Sigmoid colon (tissue), 7 donors: ENCODE measurements at regions of chr2 and their contacts with region 1.

Region 1: DNA sequence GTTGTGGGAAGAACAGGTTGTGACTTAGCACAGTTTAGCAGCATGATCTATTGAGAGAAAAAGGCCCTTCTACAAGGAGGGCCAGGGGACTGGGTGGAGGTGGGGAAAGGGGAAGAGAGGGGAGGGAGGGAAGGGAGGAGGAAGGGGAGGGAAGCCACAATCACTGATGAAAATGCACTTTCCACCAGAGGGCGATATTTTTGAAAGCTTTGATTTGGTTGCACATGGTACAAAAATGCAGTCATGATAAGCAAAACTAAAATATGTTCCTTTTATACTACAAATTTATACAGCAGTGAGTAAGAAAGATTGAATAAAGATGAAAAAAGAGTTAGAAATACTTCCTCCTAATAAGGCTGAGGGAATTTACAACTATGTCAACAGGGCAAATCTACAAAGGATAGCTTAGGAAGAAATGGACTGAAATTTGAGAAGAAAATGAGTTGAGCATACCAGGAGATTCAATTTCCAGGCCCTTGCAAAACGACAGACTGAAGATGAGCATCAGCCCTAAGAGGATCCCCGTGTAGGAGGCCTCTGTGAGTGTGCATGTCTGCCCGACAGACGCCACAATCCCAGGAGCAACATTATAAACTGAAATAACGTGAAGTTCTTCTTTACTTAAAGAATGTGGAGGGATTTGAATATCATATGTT is 17.2 kb downstream of the SH3YL1 start:
- DNase-seq: no peak
- H3K4me3 ChIP-seq: no peak overlapping the region
- H3K27ac ChIP-seq: no peak overlapping the region
- H3K4me1 ChIP-seq: no peaks in the 10 kb centered on the region
- H3K27me3 ChIP-seq: no peaks in the 10 kb centered on the region
- CTCF ChIP-seq: peak in 1 of 4 experiments; percentile 40
- EP300 ChIP-seq: no peak
- POLR2A ChIP-seq: no peak

Region 2: GRCh38 chr2:287471-287885 is 40.9 kb after region 1 on chr2:
- intact Hi-C with region 1: loop called (anchors 5 kb)
- DNase-seq: no peak
- H3K4me3 ChIP-seq: peak overlapping the region; percentile 10 to 51 (median 43)
- H3K27ac ChIP-seq: no peak overlapping the region
- H3K4me1 ChIP-seq: peaks cover 0 to 34% (median 32%) of the 10 kb centered on the region in 4 donors
- H3K27me3 ChIP-seq: peaks cover 16 to 54% (median 29%) of the 10 kb centered on the region in 3 donors
- CTCF ChIP-seq: no peak
- EP300 ChIP-seq: no peak
- POLR2A ChIP-seq: no peak